PC-3 (cell line): ENCODE measurements at regions of chr11 and their contacts with region 1.

Region 1: GRCh38 chr11:65615229-65615941 is at the start of gene PCNX3:
- DNase-seq: peak; percentile 100
- ATAC-seq: peak; percentile 82
- H3K4me3 ChIP-seq: peak within 1 kb of the TSS; percentile 90
- H3K27ac ChIP-seq: peak within 1 kb of the TSS; percentile 81
- H3K4me1 ChIP-seq: peaks cover 35% of the 10 kb centered on the region
- H3K27me3 ChIP-seq: no peaks in the 10 kb centered on the region
- CTCF ChIP-seq: no peak
- total RNA-seq, gene PCNX3: 53.6 and 69.9 TPM in 2 replicates

Region 2: DNA sequence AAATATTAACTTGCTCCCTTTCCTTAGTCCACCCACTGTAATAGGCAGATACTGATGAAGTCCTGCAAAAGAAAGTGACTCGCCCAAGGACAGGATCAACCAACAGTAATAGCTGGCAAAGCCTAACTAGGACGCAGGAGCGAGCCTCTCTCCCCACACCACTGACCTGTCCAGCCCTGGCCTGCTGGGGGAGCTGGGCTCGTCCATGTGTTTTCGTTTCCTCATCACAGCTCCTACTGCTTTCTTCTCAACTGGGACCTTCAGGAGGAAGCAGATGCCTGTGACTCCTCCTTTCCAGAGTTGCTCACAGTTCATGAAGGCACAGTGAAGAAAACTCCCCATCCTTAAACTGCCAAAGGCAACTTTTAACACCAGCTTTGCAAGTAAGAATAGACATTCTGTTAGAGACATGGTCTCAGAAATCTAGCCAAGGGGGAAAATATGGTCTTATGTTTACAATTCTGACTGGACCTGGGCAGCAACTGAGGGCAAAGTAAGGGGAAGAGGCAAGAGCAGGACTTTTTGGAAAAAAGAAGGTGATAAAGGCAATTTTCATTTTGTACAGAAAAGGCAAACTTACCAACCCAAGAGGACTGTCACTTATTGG is 668.1 kb before region 1 on chr11:
- CTCF ChIA-PET with region 1: no interaction called
- POLR2A ChIA-PET with region 1: no interaction called
- intact Hi-C with region 1: no loop called
- DNase-seq: no peak
- ATAC-seq: peak; percentile 49
- H3K4me3 ChIP-seq: no peak overlapping the region
- H3K27ac ChIP-seq: no peak overlapping the region
- H3K4me1 ChIP-seq: no peaks in the 10 kb centered on the region
- H3K27me3 ChIP-seq: no peaks in the 10 kb centered on the region
- CTCF ChIP-seq: no peak

Region 3: DNA sequence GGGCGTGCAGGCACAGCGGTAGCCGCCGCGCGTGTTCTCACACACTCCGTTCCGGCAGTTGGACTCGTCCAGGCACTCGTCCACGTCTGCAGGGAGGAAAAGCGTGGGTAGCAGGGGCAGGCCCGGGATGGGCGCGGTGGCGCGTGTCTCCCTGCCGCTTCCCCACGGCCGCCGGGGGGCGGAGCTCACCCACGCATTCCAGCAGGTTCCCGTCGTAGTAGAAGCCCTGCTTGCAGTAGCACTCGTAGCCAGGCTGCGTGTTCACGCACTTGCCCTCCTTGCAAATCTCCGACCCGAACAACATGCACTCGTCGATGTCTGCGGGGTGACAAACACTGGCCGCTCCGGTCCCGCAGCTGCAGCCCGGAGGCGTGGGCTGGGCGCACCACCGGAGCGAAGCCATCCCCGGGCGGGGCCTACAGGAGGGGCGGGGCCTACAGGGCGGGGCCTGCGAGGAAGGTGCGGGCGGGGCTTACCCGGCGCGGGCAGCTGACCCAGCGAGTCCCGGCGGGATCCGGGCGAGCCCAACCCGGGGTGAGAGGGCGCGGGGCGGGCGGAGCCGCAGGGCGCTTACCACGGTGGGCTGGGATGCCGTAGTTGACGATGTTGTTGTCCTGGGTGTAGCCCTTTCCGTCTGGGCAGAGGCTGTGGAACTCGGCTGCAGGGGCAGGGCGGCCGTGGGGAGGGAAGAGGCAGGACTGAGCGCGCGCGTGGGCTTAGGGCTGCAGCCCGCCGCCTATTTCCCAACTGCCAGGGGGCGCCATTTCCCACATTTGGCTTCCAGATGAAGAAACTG is 74.9 kb before region 1 on chr11:
- CTCF ChIA-PET with region 1: no interaction called
- POLR2A ChIA-PET with region 1: no interaction called
- intact Hi-C with region 1: loop called (anchors 10 kb)
- DNase-seq: peak; percentile 91
- ATAC-seq: peak; percentile 69
- H3K4me3 ChIP-seq: peak overlapping the region; percentile 81
- H3K27ac ChIP-seq: peak overlapping the region; percentile 69
- H3K4me1 ChIP-seq: peaks cover 19% of the 10 kb centered on the region
- H3K27me3 ChIP-seq: no peaks in the 10 kb centered on the region
- CTCF ChIP-seq: peak; percentile 92

Region 4: DNA sequence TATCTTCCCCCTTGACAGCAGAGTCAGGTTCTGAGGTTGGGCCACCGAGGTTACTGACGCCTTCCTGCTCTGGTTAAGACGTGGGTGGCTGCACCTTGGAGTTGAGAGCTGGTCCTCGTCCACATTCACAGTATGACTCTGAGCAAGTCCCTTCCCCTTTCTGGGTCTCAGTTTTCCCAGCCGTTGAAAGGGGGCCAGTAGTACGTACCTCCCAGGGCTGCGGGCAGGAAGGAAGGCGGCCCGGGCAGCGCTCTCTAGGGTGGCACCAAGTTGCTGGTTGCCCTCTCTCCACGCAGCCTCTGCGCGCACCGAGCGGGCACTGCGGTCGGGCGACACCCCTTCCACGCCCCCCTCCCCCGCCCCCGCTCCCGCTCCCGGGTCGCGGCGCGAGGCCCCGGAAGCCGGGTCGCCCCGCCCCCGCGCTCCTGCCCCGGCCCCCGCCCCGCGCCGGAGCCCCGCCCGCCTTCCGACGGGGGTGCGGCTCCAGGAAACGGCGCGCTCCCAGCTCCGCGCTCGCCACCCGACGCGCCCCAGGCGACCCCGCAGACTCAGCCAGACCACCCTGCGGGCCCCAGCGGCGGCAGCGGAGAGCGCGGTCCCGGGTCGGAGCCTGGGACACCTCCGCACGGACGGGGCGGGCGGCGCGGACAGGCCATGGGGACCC is 39.7 kb before region 1 on chr11 and contains the start of gene EHBP1L1:
- CTCF ChIA-PET with region 1: interaction called, 4 read pairs
- POLR2A ChIA-PET with region 1: interaction called, 3 read pairs
- intact Hi-C with region 1: loop called (anchors 2 kb)
- DNase-seq: peak; percentile 70
- ATAC-seq: peak; percentile 11
- H3K4me3 ChIP-seq: peak within 1 kb of the TSS; percentile 75
- H3K27ac ChIP-seq: peak within 1 kb of the TSS; percentile 65
- H3K4me1 ChIP-seq: peaks cover 55% of the 10 kb centered on the region
- H3K27me3 ChIP-seq: no peaks in the 10 kb centered on the region
- CTCF ChIP-seq: no peak
- total RNA-seq, gene EHBP1L1: 126 and 200 TPM in 2 replicates

Region 5: DNA sequence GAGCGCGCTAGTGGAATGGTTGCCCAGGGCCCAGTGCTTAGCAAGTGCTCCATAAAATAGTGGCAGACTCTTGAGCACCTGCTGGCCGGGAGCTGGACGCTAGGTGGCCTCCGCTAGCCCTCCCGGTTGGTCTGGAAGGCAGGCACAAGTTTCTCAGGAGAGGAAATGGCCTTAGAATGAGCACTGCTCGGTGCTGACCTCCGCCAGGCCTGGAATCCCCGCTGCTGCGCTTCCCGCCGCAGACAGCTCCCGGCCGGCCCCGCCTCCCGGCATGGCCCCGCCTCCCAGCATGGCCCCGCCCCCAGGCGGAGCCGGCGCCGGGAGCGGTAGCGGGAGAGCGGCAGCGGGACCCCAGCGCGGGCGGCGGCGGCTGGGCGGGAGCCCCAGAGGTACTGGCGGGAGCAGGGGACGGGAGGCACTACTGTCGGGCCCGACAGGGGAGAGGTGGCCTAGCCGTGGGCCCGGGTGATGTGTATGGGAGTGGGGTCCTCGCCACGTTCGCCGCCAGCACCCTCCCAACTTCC is 22.5 kb after region 1 on chr11 and contains the start of gene SIPA1:
- CTCF ChIA-PET with region 1: no interaction called
- POLR2A ChIA-PET with region 1: no interaction called
- intact Hi-C with region 1: loop called (anchors 1 kb)
- DNase-seq: peak; percentile 91
- ATAC-seq: peak; percentile 91
- H3K4me3 ChIP-seq: peak within 1 kb of the TSS; percentile 68
- H3K27ac ChIP-seq: no peak within 1 kb of the TSS
- H3K4me1 ChIP-seq: peaks cover 7% of the 10 kb centered on the region
- H3K27me3 ChIP-seq: no peaks in the 10 kb centered on the region
- CTCF ChIP-seq: peak; percentile 57
- total RNA-seq, gene SIPA1: 113 and 161 TPM in 2 replicates

Region 6: DNA sequence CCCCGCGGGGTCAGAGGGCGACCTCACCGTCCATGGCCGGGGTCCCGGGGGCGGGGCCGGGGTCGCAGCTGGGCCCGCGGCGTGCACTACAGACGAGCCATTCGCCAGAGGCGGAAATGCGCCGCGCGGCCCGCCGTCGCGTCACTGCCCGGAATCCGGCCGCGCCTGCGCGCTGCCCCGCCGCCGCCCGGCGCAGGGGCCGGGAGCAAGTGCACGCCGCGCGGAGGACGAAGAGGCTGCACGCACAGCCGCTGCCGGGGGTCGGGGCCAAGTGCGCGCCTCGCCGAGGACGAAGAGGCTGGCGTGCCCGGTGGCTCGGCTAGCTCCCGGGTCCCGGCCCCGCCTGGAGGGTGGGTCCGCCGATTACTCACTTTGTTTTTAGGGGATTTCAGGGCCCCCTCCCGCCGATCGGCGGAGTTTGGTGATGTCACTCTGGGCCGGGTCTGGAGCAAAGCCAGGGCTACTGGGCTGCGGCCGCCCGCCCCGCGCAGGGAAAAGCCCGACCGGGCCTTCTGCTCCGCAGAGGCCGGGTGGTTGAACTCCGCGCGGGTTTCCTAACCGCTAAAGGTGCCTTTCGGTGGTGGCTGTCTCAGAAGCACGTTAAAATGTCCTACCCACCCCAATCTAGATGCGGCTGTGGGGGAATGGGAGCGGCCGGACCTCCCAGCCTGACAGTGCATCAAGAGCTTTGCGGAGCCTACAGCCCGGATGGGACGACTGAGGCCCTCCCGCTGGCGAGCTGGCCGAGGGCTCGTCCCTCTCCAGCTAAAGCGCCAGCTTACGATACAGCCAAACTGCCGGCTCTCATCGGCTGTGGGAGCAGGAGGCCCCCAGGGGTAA is 47.6 kb after region 1 on chr11 and contains the start of gene RELA:
- CTCF ChIA-PET with region 1: no interaction called
- POLR2A ChIA-PET with region 1: no interaction called
- intact Hi-C with region 1: loop called (anchors 1 kb)
- DNase-seq: peak; percentile 95
- ATAC-seq: peak; percentile 79
- H3K4me3 ChIP-seq: peak within 1 kb of the TSS; percentile 91
- H3K27ac ChIP-seq: peak within 1 kb of the TSS; percentile 68
- H3K4me1 ChIP-seq: peaks cover 18% of the 10 kb centered on the region
- H3K27me3 ChIP-seq: no peaks in the 10 kb centered on the region
- CTCF ChIP-seq: no peak
- total RNA-seq, gene RELA: 70.3 and 84.2 TPM in 2 replicates

Region 7: DNA sequence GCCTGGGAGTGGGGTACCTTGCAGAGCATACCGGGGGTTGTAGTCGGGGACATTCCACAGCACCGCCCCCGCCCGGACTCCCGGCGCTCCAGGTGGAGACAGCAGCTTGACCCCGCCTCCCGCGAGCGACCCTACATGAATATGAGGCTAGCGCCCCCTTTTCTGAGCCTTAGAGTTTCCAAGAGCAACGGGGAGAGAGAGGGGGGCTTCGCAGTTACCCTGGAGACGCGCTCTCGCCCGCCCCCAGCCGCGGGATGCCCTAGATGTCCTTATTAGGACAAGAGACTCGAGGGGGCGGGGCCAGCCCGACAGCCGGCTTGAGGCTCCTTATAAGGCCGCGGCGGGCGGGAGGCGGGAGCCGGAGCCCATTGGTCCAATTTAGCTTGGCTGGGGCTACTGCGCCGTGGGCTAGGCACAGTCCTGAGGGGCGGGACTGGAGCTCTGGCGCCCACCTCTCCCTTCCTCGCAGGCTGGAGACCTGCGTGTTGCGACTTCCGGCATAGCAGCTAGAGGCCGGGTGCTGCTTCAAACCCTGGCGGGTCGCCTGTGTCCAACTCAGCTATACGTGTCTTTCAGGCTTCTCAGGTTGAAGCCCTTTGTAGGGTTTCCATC is 243.9 kb after region 1 on chr11:
- CTCF ChIA-PET with region 1: interaction called, 4 read pairs
- POLR2A ChIA-PET with region 1: no interaction called
- intact Hi-C with region 1: loop called (anchors 1 kb)
- DNase-seq: peak; percentile 99
- ATAC-seq: peak; percentile 63
- H3K4me3 ChIP-seq: peak overlapping the region; percentile 79
- H3K27ac ChIP-seq: peak overlapping the region; percentile 74
- H3K4me1 ChIP-seq: peaks cover 41% of the 10 kb centered on the region
- H3K27me3 ChIP-seq: no peaks in the 10 kb centered on the region
- CTCF ChIP-seq: no peak